Activated T-helper 1 cell treated with anti-CD3 and anti-CD28 coated beads, Interleukin-12 subunit alpha, Interleukin-12 subunit beta, Interleukin-2, Interleukin-4 antibody, amounts not matched to agents 30 ng/mL and 10 ng/mL and 1 ng/mL, durations not matched to agents 14 hours and 24 hours and 36 hours (primary cell): ENCODE measurements at regions of chr4 and their contacts with region 1.

Region 1: DNA sequence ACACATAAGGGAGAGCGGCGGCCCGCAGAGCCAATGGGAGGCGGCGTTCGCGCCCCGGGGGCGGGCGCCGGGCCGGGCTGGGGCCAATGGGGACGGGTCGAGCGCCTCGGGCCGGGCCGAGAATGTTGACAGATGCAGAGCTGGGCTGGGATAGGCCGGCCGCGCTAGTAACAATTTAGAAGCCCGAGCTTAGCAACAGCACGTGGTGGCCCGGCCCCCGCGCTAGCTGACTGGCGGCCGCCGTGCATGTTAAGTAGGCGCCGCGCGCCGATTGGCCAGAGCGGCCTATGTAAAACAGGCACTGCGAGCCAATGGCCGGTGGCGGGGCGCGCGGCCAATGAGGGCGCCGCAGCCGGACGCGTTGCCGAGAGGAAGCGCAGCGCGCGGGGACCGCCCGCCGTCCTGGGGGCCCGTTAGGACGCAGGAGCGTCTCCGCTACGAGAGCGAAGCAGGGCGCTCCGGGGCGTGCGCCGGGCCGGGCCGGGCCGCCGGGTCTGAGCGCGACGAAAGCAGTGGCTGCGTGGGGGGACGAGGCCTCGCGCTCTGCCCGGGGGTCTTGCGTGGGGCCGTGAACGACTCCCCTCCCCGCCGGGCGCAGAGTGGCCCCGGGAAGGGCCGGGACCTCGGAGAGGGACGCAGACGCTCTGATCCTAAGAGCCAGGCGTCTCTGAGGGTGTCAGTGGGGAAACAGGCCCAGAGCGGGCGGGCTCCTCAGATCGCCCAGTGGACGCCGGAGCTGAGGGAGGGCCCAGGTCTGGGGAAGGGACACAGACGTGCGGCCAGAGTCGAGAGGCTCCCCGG is 434 bp upstream of the MXD4 start:
- DNase-seq: peak; percentile 98
- H3K4me3 Mint-ChIP-seq: peak overlapping the region; percentile 72
- H3K27ac Mint-ChIP-seq: peak overlapping the region; percentile 67
- H3K4me1 Mint-ChIP-seq: no peaks in the 10 kb centered on the region
- H3K27me3 Mint-ChIP-seq: no peaks in the 10 kb centered on the region

Region 2: GRCh38 chr4:1870578-1871443 is 391.5 kb before region 1 on chr4 and contains the start of gene NSD2:
- intact Hi-C with region 1: loop called (anchors 2 kb)
- DNase-seq: peak; percentile 89
- H3K4me3 Mint-ChIP-seq: peak within 1 kb of the TSS; percentile 100
- H3K27ac Mint-ChIP-seq: peak within 1 kb of the TSS; percentile 100
- H3K4me1 Mint-ChIP-seq: peaks cover 38% of the 10 kb centered on the region
- H3K27me3 Mint-ChIP-seq: peaks cover 1% of the 10 kb centered on the region
- total RNA-seq, gene NSD2: 200 and 202 TPM in 2 replicates

Region 3: DNA sequence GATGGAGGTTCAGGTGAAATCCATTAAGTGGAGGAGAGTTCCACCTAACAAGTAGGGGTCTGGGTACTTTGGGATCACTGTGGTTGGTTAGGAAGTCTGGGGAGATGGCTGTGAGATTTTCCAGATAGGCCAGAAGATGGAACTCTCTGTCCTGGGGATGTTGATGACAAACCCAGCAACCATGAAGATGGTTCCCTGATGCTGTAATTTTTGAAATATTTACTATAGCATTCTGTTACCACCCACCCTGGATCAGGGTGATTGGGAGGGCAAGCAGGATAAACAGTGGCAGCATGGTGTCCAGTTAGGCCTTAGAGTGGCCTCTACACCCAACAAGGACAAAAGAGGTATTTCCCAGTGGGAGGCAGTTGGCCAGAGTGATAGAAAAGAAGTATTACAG is 237.7 kb before region 1 on chr4:
- intact Hi-C with region 1: no loop called
- DNase-seq: no peak
- H3K4me3 Mint-ChIP-seq: no peak overlapping the region
- H3K27ac Mint-ChIP-seq: no peak overlapping the region
- H3K4me1 Mint-ChIP-seq: no peaks in the 10 kb centered on the region
- H3K27me3 Mint-ChIP-seq: peaks cover 54% of the 10 kb centered on the region

Region 4: DNA sequence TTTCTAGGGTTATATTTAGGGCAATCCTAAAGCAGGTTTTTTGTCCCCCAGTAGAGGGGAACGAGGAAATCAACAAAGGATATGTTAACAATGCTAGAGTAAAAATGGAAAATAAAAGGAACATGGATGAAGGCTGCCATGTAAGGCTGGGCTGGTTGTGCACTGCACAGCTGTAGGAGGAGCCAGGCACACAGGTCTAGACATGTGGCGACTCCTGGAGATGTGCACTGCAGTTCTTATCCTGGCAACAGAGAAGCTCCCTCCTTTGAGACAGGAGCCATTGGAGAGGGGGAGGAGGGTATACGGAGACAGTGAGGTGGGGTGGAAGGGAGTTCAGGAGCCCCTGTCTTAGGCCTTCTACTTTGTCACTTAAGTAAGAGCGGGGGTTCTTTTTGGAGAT is 137.3 kb before region 1 on chr4:
- intact Hi-C with region 1: no loop called
- DNase-seq: no peak
- H3K4me3 Mint-ChIP-seq: no peak overlapping the region
- H3K27ac Mint-ChIP-seq: no peak overlapping the region
- H3K4me1 Mint-ChIP-seq: peaks cover 6% of the 10 kb centered on the region
- H3K27me3 Mint-ChIP-seq: peaks cover 6% of the 10 kb centered on the region

Region 5: GRCh38 chr4:2220016-2220630 is 42.2 kb before region 1 on chr4:
- intact Hi-C with region 1: loop called (anchors 1 kb)
- DNase-seq: peak; percentile 66
- H3K4me3 Mint-ChIP-seq: no peak overlapping the region
- H3K27ac Mint-ChIP-seq: no peak overlapping the region
- H3K4me1 Mint-ChIP-seq: peaks cover 12% of the 10 kb centered on the region
- H3K27me3 Mint-ChIP-seq: no peaks in the 10 kb centered on the region

Region 6: GRCh38 chr4:2412885-2413716 is 150.8 kb after region 1 on chr4:
- intact Hi-C with region 1: loop called (anchors 1 kb)
- DNase-seq: peak; percentile 88
- H3K4me3 Mint-ChIP-seq: peak overlapping the region; percentile 64
- H3K27ac Mint-ChIP-seq: peak overlapping the region; percentile 93
- H3K4me1 Mint-ChIP-seq: peaks cover 69% of the 10 kb centered on the region
- H3K27me3 Mint-ChIP-seq: peaks cover 16% of the 10 kb centered on the region

Region 7: GRCh38 chr4:2934813-2935761 is 672.7 kb after region 1 on chr4:
- intact Hi-C with region 1: loop called (anchors 10 kb)
- DNase-seq: peak; percentile 95
- H3K4me3 Mint-ChIP-seq: peak overlapping the region; percentile 94
- H3K27ac Mint-ChIP-seq: peak overlapping the region; percentile 87
- H3K4me1 Mint-ChIP-seq: peaks cover 49% of the 10 kb centered on the region
- H3K27me3 Mint-ChIP-seq: no peaks in the 10 kb centered on the region